OCI-LY7 (cell line): ENCODE measurements at regions of chr15 and their contacts with region 1.

Region 1: DNA sequence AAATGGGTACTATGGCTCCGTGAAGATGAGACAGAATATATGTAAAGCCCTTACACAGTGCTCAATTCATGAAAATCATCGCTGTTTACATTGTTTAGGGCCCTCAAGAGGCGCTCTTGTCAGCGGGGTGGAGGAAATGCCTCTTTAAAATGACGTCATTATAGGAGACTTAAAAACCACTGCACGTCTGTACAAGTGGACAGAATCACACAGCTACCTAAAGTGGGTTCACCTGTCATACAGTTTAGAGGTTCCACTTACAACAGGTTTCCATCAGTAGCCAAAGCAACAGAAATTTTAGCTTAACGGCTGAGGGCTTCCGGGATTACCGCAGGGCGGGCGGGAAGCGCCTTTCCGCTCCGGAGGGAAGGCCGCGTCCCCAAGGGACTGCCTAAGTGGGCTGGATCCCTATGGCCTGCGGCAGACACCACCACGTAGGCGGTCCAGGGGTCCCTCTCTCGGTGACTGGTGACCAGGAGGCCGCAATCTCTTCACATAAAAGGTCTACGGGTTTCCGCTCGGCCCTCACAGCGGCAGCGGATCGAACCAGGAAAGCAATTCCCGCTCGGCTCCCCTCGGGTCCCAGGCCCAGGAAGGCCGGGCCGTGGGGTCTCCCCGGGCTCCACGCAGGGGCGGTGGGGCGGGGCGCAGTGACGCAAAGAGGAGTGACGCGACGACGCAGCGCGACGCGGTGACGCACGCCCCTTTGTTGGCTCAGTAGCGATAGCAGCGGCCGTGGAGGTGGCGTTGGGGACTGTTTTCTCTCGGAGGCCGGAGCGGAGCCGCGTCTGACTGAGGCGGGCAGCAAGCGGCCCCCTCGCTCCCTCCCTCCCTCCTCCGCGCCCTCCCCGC is at the start of gene ARIH1:
- DNase-seq: peak; percentile 95
- H3K4me3 ChIP-seq: peak within 1 kb of the TSS; percentile 94
- H3K27ac ChIP-seq: peak within 1 kb of the TSS; percentile 85
- H3K4me1 ChIP-seq: peaks cover 30% of the 10 kb centered on the region
- CTCF ChIP-seq: peak; percentile 70
- total RNA-seq, gene ARIH1: 33.0 and 37.1 TPM in 2 replicates

Region 2: DNA sequence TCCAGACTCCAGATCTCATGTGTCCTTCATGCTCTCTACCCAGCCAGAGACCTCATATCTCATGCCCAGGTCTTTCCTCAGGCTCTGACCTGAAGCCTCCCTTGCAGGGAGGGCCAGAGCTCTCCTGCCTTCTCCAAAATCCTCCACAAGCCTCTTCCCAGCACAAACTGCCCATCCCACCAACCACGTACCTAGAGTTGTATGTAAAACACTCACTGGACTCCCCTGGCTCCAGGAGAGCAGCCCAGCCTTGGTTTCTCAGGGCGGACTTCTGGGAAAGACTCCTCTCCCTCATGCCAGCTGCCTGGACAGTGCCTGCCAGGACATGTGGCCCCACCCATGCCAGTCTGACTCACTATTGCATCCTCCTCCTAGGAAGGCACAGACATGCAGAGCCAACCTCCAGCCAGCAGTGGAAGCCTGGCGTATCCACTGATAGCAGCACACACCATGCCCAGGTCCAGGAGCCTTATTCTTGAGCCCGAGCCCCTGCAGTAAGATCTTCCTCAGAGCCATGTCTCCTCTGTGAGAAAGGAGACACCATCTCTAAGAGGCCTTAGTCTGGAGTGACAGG is 251.5 kb before region 1 on chr15:
- CTCF ChIA-PET with region 1: no interaction called
- POLR2A ChIA-PET with region 1: no interaction called
- intact Hi-C with region 1: no loop called
- DNase-seq: no peak
- H3K4me3 ChIP-seq: no peak overlapping the region
- H3K27ac ChIP-seq: no peak overlapping the region
- H3K4me1 ChIP-seq: peaks cover 45% of the 10 kb centered on the region
- CTCF ChIP-seq: no peak

Region 3: GRCh38 chr15:72272213-72273002 is 201.4 kb before region 1 on chr15 and contains the start of gene PARP6:
- CTCF ChIA-PET with region 1: no interaction called
- POLR2A ChIA-PET with region 1: interaction called, 3 read pairs
- intact Hi-C with region 1: loop called (anchors 5 kb)
- DNase-seq: peak; percentile 97
- H3K4me3 ChIP-seq: peak within 1 kb of the TSS; percentile 97
- H3K27ac ChIP-seq: peak within 1 kb of the TSS; percentile 42
- H3K4me1 ChIP-seq: peaks cover 25% of the 10 kb centered on the region
- CTCF ChIP-seq: peak; percentile 78
- total RNA-seq, gene PARP6: 53.6 and 58.3 TPM in 2 replicates

Region 4: DNA sequence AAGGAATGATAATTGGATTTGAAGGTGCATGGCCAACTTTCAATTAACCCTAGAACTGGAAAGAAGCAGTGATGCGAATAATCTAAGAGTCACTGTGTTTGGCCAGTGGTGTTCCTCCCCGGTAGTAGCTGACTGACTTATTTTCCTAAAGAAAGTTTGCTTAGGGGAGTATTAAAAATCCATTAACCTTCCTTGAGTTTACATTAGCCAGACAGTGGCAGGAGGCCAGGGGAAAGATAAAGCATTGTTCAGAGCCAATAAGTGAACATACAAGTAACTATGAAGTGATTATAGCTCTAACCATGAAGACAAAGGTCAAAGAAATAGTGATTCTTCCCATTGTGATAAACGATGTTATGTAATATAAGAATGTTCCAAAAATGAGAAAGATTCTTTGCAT is 84.6 kb before region 1 on chr15:
- CTCF ChIA-PET with region 1: no interaction called
- POLR2A ChIA-PET with region 1: no interaction called
- intact Hi-C with region 1: no loop called
- DNase-seq: no peak
- H3K4me3 ChIP-seq: no peak overlapping the region
- H3K27ac ChIP-seq: no peak overlapping the region
- H3K4me1 ChIP-seq: no peaks in the 10 kb centered on the region
- CTCF ChIP-seq: no peak

Region 5: DNA sequence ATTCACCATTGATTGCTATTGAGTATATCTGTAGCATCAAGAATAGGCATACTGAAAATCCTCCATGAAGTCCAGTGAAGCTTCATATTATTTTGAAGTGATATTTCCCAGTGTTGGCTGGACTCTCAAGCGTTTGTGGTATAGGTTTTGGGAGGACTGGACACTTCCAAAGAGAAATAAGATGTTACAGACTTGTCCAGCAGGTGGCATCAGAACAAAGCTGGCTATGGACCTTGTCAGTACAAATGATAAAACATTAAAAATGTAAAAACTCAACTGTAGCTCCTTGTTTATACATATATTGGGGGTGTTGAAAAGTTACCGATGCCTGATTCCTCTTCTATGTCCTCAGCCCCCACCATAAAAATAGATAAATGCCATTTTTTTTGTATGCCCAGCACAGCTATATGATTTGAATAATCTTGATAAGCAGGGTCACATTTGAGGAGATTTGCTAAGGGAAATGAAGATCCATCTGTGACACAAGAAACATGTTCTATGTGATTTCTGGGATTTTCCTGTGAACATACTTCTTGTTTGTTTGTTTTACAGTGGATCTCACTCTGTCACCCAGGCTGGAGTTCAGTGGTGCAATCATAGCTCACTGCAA is 126.1 kb after region 1 on chr15:
- CTCF ChIA-PET with region 1: no interaction called
- POLR2A ChIA-PET with region 1: no interaction called
- intact Hi-C with region 1: no loop called
- DNase-seq: peak; percentile 54
- H3K4me3 ChIP-seq: no peak overlapping the region
- H3K27ac ChIP-seq: no peak overlapping the region
- H3K4me1 ChIP-seq: no peaks in the 10 kb centered on the region
- CTCF ChIP-seq: peak; percentile 92

Region 6: DNA sequence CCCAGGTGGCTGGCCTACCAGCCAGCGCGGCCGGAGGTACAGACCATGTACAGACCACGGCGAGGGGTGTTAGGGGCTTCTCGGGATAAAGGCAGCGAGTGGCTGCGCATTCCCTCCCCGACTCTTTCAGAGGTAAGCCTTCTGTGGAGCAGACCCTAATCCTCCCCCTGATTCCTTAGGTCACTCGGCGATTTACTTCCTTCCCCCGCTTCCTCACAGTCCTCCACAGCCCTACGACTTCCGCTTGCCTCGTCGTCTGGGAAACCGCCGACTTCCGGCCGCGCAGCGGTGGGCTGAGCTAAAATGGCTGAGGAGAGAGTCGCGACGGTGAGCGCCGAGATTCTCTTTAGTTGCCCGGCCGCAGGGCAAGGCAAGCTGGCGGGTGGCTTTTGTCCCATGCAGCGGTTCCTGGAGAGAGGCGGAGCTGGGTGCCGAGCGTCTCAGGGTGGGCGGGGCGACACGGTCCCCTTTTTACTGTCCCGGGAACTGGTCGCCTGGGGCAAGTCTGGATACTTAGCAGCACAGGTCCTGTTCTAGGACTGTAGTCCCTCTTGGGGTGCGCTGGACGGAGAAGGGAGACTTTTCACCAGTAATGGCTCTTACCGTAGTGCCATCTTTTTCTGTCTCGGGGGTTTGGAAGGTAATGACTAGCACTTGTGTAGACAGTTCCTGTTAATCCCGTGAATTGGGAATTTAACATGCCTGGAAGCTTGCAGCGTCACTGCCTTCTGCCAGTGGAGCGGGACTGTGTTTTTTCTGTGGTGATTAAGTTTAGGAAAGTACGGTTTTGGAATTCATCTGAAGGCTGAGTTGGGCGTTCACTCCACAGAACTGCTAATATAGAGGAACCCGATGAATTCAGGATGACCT is 212.3 kb after region 1 on chr15 and contains the starts of genes BBS4 and HIGD2B:
- CTCF ChIA-PET with region 1: no interaction called
- POLR2A ChIA-PET with region 1: no interaction called
- intact Hi-C with region 1: loop called (anchors 10 kb)
- DNase-seq: peak; percentile 90
- H3K4me3 ChIP-seq: peak within 1 kb of the TSS; percentile 90
- H3K27ac ChIP-seq: peak within 1 kb of the TSS; percentile 85
- H3K4me1 ChIP-seq: peaks cover 30% of the 10 kb centered on the region
- CTCF ChIP-seq: no peak
- total RNA-seq, gene BBS4: 21.4 and 29.7 TPM in 2 replicates
- total RNA-seq, gene HIGD2B: 0.22 and 1.5 TPM in 2 replicates